Sigmoid colon (tissue), 7 donors: ENCODE measurements at regions of chr1 and their contacts with region 1.

Region 1: GRCh38 chr1:180482425-180483275 is 19.7 kb downstream of the ACBD6 start:
- DNase-seq: no peak
- H3K4me3 ChIP-seq: no peak overlapping the region
- H3K27ac ChIP-seq: no peak overlapping the region
- H3K4me1 ChIP-seq: no peaks in the 10 kb centered on the region
- H3K27me3 ChIP-seq: no peaks in the 10 kb centered on the region
- CTCF ChIP-seq: peak; percentile 40 to 70 (median 58)
- EP300 ChIP-seq: no peak
- POLR2A ChIP-seq: no peak

Region 2: DNA sequence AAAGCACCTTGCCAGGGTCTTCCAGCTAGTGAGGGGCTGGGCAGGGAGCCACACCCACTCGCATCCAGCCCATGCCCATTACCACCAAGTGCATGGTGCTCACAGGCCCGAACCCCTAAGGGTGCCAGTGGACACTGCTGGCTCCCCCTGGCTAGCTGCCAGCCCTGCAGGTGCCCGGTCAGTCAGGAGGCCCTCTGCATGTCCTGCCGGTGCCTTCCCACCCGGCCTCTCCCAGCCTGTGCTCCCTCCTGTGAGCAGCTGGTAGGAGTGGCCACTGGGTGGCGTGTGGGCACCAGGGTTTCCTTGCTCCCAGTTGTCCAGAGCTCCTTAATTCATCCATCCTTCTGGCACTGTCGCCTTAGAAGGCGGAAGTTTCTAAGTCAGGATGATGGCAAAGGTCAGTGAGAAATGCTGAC is 294.6 kb before region 1 on chr1:
- intact Hi-C with region 1: loop called (anchors 5 kb)
- DNase-seq: no peak
- H3K4me3 ChIP-seq: no peak overlapping the region
- H3K27ac ChIP-seq: no peak overlapping the region
- H3K4me1 ChIP-seq: no peaks in the 10 kb centered on the region
- H3K27me3 ChIP-seq: no peaks in the 10 kb centered on the region
- CTCF ChIP-seq: peak in 2 of 4 experiments; percentile 38 to 44
- EP300 ChIP-seq: no peak
- POLR2A ChIP-seq: no peak

Region 3: GRCh38 chr1:180252638-180253536 is 229.8 kb before region 1 on chr1:
- intact Hi-C with region 1: loop called (anchors 5 kb)
- DNase-seq: peak; percentile 77
- H3K4me3 ChIP-seq: no peak overlapping the region
- H3K27ac ChIP-seq: no peak overlapping the region
- H3K4me1 ChIP-seq: no peaks in the 10 kb centered on the region
- H3K27me3 ChIP-seq: peaks cover 18 to 66% (median 36%) of the 10 kb centered on the region in 3 donors
- CTCF ChIP-seq: peak in 3 of 4 experiments; percentile 58 to 67 (median 62)
- EP300 ChIP-seq: no peak
- POLR2A ChIP-seq: no peak

Region 4: DNA sequence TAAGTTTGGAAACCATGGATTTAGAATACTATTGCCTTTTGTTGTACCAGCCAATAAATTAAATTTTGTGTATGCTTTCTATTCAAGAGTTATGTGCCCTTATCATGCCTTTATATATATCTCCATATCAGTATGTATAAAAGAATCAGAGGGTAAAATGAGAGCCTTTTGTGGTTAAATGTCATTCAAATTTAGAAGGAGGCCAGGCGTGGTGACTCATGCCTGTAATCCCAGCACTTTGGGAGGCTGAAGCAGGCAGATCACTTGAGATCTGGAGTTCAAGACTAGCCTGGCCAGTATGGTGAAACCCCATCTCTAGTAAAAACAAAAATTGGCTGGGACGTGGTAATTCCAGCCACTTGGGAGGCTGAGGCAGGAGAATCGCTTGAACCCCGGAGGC is 238.1 kb after region 1 on chr1:
- intact Hi-C with region 1: no loop called
- DNase-seq: no peak
- H3K4me3 ChIP-seq: no peak overlapping the region
- H3K27ac ChIP-seq: no peak overlapping the region
- H3K4me1 ChIP-seq: peaks cover 0 to 5% (median 2%) of the 10 kb centered on the region in 4 donors
- H3K27me3 ChIP-seq: no peaks in the 10 kb centered on the region
- CTCF ChIP-seq: no peak
- EP300 ChIP-seq: no peak
- POLR2A ChIP-seq: no peak